Activated T-helper 2 cell treated with anti-CD3 and anti-CD28 coated beads, Interferon-gamma antibody, Interleukin-2, Interleukin-4, amounts not matched to agents 10 μg/mL and 5 μg/mL and 100 μg/mL, durations not matched to agents 14 hours and 24 hours and 36 hours (primary cell): ENCODE measurements at regions of chr4 and their contacts with region 1.

Region 1: DNA sequence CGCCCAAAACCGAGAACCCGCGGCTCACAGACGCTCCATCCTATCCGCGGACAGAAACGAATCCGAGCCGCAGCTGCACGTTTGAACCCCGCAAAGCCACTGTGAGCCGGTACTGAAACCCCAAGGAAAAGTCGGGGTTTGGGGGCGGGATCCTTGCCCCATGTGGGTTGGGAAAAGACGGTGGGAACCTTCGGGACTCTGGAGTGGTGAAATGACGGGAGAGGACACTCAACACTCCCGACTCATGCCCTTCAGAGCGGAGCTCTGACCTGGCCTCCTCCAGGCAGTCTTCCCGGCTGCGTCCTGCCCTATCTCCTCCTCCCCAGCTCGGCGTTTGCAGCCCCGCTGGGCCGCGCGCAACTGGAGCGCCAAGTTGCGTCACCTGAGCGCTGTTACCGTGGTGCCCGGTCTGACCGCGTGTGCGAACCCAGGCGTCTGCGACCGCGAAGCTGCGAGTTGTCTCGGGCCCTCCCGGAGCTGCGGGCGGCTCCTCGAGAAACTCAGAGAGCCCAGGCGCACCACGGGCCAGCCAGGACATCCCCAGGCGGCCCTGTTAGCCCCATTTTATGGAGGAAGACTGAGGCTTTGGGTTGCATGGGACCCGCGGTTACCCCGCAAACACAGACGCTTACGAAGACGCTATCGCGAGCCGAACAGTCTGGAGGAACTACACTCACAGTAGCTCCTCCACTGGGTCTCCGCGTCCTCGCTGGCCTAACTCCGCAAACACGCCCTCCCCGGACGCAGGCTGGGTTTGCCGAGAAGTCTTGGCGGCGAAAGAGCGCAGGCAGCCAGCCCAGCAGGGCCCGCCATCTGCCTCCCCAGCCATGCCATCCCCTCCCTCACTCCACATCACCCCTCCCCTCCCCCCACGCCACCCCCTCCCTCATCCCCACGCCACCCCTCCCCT is 20.3 kb upstream of the HMX1 start:
- DNase-seq: no peak
- H3K4me3 Mint-ChIP-seq: no peak overlapping the region
- H3K27ac Mint-ChIP-seq: no peak overlapping the region
- H3K4me1 Mint-ChIP-seq: no peaks in the 10 kb centered on the region
- H3K27me3 Mint-ChIP-seq: peaks cover 43% of the 10 kb centered on the region

Region 2: DNA sequence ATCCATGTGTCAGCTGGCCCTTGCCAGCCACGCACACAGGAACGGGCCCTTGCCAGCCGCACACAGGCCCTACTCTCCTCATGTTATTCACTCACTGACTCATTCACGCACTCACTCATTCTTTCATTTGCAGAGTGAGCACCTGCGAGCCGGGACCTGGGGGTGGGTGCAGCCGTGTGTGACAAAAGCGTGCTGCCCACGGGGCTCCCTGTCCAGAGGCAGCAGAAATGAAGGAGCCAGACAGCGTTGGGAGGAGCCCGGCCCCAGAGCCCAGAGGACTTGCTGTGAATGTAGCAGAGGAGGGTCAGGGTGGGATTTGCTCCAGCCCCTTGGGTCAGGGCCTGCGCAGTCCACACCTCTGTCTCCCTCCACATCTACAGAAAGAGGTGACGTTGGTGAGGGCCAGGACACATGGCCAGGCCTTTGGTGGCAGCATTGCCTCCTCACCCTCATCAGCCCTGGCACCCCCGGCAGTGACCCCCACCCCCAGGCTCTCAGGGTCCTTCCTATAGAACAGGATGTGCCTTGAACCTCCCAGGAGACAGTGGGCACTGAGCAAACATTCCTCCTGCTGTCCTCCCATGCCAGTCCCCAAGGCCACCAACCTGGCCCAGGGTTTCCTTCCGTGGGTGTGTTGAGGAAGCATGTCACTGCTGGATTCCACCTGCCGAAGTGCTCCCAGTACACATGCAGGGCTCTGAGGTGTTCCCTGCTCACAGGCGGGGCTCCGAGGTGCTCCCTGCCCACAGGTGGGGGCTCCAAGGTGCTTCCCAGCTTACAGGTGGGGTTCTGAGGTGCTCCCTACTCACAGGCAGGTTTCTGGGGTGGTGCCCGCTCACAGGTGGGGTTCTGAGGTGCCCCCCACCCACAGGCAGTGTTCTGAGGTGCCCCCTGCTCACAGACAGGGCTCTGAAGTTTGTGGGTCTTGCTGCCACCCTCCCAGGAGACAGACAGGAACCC is 126.0 kb before region 1 on chr4:
- intact Hi-C with region 1: no loop called
- DNase-seq: no peak
- H3K4me3 Mint-ChIP-seq: no peak overlapping the region
- H3K27ac Mint-ChIP-seq: no peak overlapping the region
- H3K4me1 Mint-ChIP-seq: no peaks in the 10 kb centered on the region
- H3K27me3 Mint-ChIP-seq: no peaks in the 10 kb centered on the region

Region 3: GRCh38 chr4:8819473-8820177 is 72.3 kb before region 1 on chr4:
- intact Hi-C with region 1: no loop called
- DNase-seq: peak; percentile 4
- H3K4me3 Mint-ChIP-seq: no peak overlapping the region
- H3K27ac Mint-ChIP-seq: no peak overlapping the region
- H3K4me1 Mint-ChIP-seq: no peaks in the 10 kb centered on the region
- H3K27me3 Mint-ChIP-seq: no peaks in the 10 kb centered on the region

Region 4: GRCh38 chr4:8855818-8856245 is 36.1 kb before region 1 on chr4:
- intact Hi-C with region 1: loop called (anchors 2 kb)
- DNase-seq: no peak
- H3K4me3 Mint-ChIP-seq: no peak overlapping the region
- H3K27ac Mint-ChIP-seq: no peak overlapping the region
- H3K4me1 Mint-ChIP-seq: peaks cover 2% of the 10 kb centered on the region
- H3K27me3 Mint-ChIP-seq: peaks cover 47% of the 10 kb centered on the region

Region 5: GRCh38 chr4:8874896-8875680 is 16.8 kb before region 1 on chr4:
- intact Hi-C with region 1: loop called (anchors 2 kb)
- DNase-seq: no peak
- H3K4me3 Mint-ChIP-seq: no peak overlapping the region
- H3K27ac Mint-ChIP-seq: no peak overlapping the region
- H3K4me1 Mint-ChIP-seq: no peaks in the 10 kb centered on the region
- H3K27me3 Mint-ChIP-seq: peaks cover 63% of the 10 kb centered on the region

Region 6: DNA sequence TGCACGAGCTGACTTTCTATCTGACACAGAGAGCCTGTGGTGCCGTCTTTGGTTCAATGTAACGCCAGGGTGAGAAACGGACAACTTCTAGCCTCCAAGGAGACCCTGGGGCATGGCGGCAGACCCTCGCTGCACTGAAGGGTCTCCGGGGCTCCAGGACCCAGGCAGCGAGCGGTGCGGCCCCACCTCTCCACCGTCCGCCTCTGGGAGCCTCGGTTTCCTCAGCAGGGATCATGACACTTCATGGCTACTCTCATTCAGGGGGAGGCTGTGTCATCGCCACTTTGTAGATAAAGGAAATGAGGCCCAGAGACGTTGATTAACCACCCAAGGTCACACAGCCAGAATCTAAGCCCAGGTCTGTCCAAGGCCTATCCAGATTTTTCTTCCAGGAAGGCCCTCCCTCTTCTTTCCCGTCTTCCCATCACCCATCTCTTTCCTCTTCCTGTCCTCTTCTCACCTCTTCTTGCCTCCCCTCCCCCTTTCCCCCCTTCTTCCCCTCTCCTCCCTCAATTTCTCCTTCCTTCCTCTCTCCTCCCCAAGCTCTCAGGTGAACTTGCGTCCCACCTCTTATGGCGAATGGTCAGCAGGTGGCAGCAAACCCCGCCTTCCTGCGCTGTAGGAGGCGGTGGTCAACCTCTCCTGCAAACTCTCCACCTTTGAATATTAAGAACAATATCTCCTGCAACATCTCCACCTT is 49.0 kb after region 1 on chr4:
- intact Hi-C with region 1: no loop called
- DNase-seq: no peak
- H3K4me3 Mint-ChIP-seq: no peak overlapping the region
- H3K27ac Mint-ChIP-seq: no peak overlapping the region
- H3K4me1 Mint-ChIP-seq: no peaks in the 10 kb centered on the region
- H3K27me3 Mint-ChIP-seq: no peaks in the 10 kb centered on the region